Heart left ventricle (tissue), 16 donors: ENCODE measurements at regions of chr2 and their contacts with region 1.

Region 1: DNA sequence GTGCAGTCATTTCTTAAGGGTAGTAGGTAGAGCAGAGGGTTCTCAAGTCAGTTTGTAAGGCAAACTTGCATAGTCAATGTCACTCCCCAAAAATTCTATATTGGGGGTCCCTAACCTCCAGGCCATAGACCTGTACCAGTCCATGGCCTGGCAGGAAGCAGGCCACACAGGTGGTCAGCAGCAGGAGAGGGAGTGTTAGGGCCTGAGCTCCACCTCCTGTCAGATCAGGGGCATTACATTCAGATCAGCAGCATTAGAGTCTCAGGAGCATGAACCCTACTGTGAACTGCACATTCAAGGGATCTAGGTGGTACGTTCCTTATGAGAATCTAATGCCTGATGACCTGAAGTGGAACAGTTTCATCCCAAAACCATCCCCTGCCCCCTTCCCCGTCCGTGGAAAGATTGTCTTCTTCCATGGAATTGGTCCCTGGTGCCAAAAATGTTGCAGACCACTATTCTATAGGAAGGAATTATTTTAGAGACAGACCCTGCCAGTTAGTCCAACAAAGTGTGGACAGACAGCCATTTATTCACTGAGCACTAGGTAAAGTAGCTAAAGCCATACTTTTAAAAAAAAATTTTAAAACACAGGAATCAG is 6.7 kb downstream of the COA5 start:
- DNase-seq: no peak
- ATAC-seq: peak; percentile 63 to 86 (median 82)
- H3K4me3 ChIP-seq: no peak overlapping the region
- H3K27ac ChIP-seq: no peak overlapping the region
- H3K4me1 ChIP-seq: peaks cover 2 to 27% (median 15%) of the 10 kb centered on the region in 12 donors
- H3K27me3 ChIP-seq: no peaks in the 10 kb centered on the region
- CTCF ChIP-seq: peak; percentile 42 to 71 (median 57)
- POLR2A ChIP-seq: no peak

Region 2: GRCh38 chr2:98548920-98549818 is 52.5 kb before region 1 on chr2:
- intact Hi-C with region 1: loop called in 1 of 10 experiments (anchors 10 kb)
- DNase-seq: no peak
- ATAC-seq: no peak
- H3K4me3 ChIP-seq: no peak overlapping the region
- H3K27ac ChIP-seq: no peak overlapping the region
- H3K4me1 ChIP-seq: peaks cover 0 to 4% (median 0%) of the 10 kb centered on the region in 12 donors
- H3K27me3 ChIP-seq: no peaks in the 10 kb centered on the region
- CTCF ChIP-seq: no peak
- POLR2A ChIP-seq: no peak

Region 3: DNA sequence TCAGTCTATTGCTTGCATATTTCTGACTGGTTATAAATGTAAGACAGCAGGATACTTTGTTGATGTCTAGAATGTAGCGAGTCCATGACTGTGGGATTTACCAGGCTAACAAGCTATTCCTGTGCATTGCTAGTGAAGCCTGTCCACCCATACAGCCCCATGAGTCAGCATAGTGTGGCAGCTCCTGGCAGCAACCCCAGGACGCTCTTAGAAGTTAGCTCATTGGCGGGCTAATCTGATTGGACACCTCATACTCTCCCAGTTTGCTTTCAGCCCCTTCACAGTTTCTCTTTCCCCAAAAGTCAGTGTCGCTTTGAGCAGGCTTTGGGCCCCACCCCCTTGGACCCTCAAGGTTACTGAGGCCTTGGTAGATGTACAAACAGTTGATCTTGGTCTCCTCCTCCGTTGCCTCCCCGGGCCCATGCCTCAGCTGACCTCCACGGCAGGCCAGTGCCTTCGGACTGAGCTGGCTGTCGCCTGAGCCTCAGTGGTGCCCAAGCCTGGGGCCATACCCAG is 41.3 kb before region 1 on chr2:
- intact Hi-C with region 1: loop called in 3 of 10 experiments (anchors 2 to 5 kb)
- DNase-seq: peak in 4 of 5 donors; percentile 58 to 82 (median 72)
- ATAC-seq: peak; percentile 86 to 92 (median 90)
- H3K4me3 ChIP-seq: no peak overlapping the region
- H3K27ac ChIP-seq: peak overlapping the region in 11 of 12 donors; percentile 36 to 85 (median 62)
- H3K4me1 ChIP-seq: peaks cover 5 to 80% (median 45%) of the 10 kb centered on the region in 12 donors
- H3K27me3 ChIP-seq: no peaks in the 10 kb centered on the region
- CTCF ChIP-seq: no peak
- POLR2A ChIP-seq: no peak